PC-9 (cell line): ENCODE measurements at regions of chr3 and their contacts with region 1.

Region 1: DNA sequence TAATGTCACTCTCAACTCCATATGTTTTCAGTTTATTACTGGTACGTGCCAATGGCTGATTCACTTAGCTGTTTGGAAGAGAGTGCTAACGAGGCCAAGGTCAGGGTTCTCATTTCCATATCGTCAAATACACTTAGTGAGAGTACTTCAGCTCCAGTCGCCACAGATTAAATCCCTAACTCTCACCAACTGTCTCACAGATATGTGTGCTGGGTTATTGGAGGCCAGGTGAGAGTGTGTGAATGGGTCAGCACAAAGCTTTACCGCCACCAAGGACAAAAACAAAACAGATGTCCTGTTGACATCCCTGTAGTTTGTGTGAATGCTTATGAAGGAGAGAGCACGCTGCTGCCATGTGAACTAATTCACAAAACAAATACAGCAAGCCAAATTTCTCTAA is 133.5 kb upstream of the TBL1XR1 start:
- DNase-seq: no peak
- H3K4me3 ChIP-seq: no peak overlapping the region
- H3K27ac ChIP-seq: no peak overlapping the region
- H3K4me1 ChIP-seq: peaks cover 19% of the 10 kb centered on the region
- H3K27me3 ChIP-seq: no peaks in the 10 kb centered on the region
- CTCF ChIP-seq: no peak

Region 2: GRCh38 chr3:177220136-177220974 is 110.4 kb before region 1 on chr3:
- CTCF ChIA-PET with region 1: no interaction called
- POLR2A ChIA-PET with region 1: interaction called, 12 read pairs
- intact Hi-C with region 1: no loop called
- DNase-seq: no peak
- H3K4me3 ChIP-seq: no peak overlapping the region
- H3K27ac ChIP-seq: no peak overlapping the region
- H3K4me1 ChIP-seq: no peaks in the 10 kb centered on the region
- H3K27me3 ChIP-seq: no peaks in the 10 kb centered on the region
- CTCF ChIP-seq: no peak